Left ventricle myocardium superior (tissue), 1 donor: ENCODE measurements at regions of chr10 and their contacts with region 1.

Region 1: GRCh38 chr10:52488606-52489485 is 174.8 kb downstream of the DKK1 start:
- DNase-seq: no peak
- ATAC-seq: no peak

Region 2: DNA sequence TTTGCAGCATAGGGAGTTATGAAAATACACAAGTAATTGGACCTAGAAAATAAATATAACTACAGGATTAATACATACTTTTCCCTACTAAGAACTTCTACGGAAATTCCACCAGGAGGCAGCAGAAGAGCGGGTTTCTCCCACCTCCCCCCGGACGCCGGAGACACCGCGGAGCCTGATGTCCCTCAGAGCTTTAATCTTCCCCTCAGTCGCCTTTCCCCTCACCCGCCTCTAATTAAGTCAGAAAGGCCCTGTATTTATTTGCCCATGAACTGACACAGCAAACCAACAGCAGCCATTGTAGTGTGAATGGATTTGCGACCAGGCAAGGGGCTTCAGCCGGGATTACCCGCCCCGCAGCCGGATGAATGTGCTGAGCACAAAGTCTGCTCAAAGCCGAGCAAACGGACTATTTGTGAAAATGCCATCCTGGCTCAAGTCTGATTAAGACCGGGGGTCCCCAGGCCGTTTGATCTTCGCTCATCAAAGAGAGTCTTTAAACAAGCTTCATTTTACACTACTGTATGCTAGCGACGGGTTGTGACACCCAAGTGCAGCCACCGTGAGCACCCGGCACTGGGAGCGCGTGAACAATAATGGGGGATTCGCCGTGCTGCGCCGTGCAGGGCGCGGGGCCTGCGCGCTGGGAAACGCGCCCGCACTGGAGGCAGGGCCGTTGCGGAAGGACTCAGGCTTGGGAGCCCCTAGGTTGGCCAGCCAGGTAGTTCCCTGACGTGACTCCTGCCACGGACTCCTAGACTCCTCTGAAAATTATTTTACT is 180.4 kb before region 1 on chr10:
- intact Hi-C with region 1: loop called (anchors 2 kb)
- DNase-seq: peak; percentile 66
- ATAC-seq: peak; percentile 94

Region 3: DNA sequence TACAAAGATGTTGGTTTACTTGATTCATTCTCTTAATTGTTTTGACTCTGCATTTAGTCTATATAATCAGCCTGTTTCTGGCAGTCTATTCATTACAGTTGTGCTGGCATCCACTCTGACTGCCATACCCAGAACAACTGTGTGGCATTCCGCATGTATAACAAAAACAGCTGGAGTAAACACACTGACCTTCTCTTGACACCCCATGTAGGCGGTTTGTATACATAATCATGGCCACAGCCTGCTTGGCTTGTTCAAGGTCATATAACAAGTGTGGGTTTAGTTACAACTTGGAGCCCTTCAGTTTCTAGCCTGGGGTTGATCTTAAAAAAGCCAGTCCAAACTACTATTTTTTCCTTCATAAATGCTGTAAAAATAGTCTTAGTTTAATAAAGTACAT is 212.8 kb after region 1 on chr10:
- intact Hi-C with region 1: no loop called
- DNase-seq: no peak
- ATAC-seq: no peak